GM10248 (cell line): ENCODE measurements at regions of chr2 and their contacts with region 1.

Region 1: DNA sequence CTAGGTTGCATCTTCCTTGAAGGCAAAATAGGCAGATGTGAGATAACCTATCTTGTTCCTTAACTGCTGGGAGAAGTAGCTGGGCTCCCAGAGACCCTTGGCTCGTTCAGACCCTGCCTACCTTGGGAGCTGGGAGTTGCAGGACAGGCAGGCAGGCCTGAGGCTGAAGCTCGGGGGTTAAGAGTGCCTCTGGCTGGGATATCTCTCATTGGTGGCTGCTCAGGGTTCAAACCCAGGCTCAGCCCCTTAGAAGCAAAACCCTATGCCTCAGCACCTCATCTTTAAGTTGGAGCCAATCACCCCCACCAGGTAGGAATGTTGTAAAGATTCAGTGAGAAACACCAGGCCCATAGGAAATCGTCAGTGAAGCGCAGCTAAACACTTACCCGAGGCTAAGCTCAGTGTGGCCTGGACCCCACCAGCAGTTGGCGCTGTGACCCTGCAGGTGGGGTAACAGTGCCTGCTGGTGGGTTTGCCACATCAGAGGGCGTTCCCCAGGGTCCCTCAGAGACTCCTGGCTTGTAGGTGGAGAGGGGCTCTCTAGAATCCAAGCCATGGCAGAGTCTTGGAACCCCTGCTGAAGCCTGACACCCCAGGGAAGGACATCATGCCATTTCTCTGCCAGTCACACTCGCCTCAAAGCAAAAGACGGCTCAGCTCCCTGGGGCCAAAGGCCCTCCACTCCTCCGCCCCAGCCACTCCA is 54.6 kb upstream of the GPR17 start:
- DNase-seq: peak; percentile 87
- CTCF ChIP-seq: peak; percentile 91

Region 2: GRCh38 chr2:127563458-127564428 is 27.6 kb before region 1 on chr2:
- CTCF ChIA-PET with region 1: interaction called, 11 read pairs
- POLR2A ChIA-PET with region 1: no interaction called
- DNase-seq: peak; percentile 91
- CTCF ChIP-seq: no peak

Region 3: DNA sequence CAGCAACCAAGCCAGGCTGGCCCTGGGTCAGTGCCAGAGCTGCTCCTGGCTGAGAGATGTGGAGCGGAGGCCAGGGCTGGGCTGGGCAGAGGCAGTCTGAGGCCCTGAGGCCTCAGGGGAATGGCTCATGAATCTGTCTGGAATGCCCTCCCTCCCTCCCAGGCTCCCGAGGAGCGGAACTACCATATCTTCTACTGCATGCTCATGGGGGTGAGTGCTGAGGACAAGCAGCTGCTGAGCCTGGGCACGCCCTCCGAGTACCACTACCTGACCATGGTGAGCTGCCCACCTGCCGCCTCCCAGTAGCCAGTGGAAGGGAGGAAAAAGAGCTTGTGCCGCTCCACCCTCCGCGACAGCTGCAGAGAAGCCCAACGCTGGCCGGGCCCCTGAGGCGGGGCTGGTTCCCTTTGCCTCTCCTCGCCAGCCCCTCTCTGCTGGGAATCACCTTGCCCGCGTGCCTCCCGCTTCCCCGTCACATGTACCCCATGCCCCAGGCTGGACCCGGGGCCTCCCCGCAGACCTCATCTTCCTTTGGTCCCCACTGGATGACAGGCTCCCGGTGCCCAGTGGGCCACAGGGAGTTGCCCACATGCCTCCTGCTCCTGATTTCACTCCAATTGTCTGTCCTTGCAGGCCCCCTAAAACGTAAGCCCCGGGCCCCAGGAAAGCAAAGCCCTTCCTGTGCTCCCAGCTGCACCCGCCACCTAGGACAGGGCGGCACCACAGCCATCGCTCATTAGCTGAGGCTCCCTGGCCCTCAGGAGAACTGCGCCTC is 14.8 kb before region 1 on chr2:
- CTCF ChIA-PET with region 1: interaction called, 67 read pairs
- POLR2A ChIA-PET with region 1: no interaction called
- DNase-seq: no peak
- CTCF ChIP-seq: no peak

Region 4: GRCh38 chr2:127608071-127609030 is 17.0 kb after region 1 on chr2:
- CTCF ChIA-PET with region 1: interaction called, 53 read pairs
- POLR2A ChIA-PET with region 1: no interaction called
- DNase-seq: no peak
- CTCF ChIP-seq: no peak

Region 5: GRCh38 chr2:127615501-127616166 is 24.3 kb after region 1 on chr2:
- CTCF ChIA-PET with region 1: interaction called, 11 read pairs
- POLR2A ChIA-PET with region 1: no interaction called
- DNase-seq: no peak
- CTCF ChIP-seq: no peak

Region 6: GRCh38 chr2:127637725-127638252 is 46.4 kb after region 1 on chr2:
- CTCF ChIA-PET with region 1: interaction called, 28 read pairs
- POLR2A ChIA-PET with region 1: no interaction called
- DNase-seq: no peak
- CTCF ChIP-seq: no peak

Region 7: DNA sequence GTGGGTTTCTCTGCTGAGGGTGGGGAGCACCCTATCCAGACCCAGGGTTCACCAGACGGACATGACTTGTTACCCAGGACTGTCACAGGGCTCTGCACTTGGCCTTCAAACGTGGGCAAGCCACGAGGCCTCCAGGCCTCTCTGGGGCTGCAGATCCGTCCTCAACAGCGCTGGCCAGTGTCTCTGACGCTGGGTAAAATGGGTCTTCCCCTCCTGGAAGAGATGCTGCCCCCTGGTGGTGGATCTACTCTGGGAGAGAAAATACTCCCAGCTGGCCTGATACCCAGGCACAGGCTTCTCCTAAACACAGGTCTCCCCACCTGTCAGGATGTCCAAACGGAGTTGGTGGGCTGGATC is 58.3 kb after region 1 on chr2:
- CTCF ChIA-PET with region 1: interaction called, 90 read pairs
- POLR2A ChIA-PET with region 1: interaction called, 3 read pairs
- DNase-seq: peak; percentile 87
- CTCF ChIP-seq: peak; percentile 69

Region 8: GRCh38 chr2:127683757-127684156 is 92.4 kb after region 1 on chr2:
- CTCF ChIA-PET with region 1: no interaction called
- POLR2A ChIA-PET with region 1: no interaction called
- DNase-seq: no peak
- CTCF ChIP-seq: no peak